HEK293 (cell line): ENCODE measurements at regions of chr19 and their contacts with region 1.

Region 1: DNA sequence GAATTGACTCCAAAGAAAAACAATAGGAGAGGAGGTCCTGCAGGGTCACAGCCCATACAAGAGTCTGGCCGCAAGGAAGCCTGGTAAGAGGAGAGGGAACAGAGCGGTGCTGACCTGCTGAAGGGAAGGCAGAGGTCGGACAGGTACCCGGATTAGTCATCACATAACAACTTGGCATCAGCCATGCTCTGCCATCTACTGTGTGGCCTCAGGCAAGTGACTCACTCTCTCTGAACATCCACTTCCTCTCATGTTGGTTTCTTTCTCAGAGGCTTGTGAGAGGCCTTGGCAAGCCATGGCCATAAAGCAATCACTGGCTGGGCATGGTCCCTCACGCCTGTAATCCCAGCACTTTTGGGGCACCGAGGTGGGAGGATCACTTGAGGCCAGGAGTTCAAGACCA is 7.4 kb upstream of the CAPNS1 start:
- H3K4me3 ChIP-seq: no peak overlapping the region
- H3K27ac ChIP-seq: no peak overlapping the region
- H3K4me1 ChIP-seq: peaks cover 12% of the 10 kb centered on the region
- CTCF ChIP-seq: no peak

Region 2: GRCh38 chr19:36073121-36073872 is 59.2 kb before region 1 on chr19:
- CTCF ChIA-PET with region 1: interaction called, 10 read pairs
- POLR2A ChIA-PET with region 1: interaction called, 6 read pairs
- H3K4me3 ChIP-seq: no peak overlapping the region
- H3K27ac ChIP-seq: peak overlapping the region; percentile 31; the same call in 1 of the 2 replicates
- H3K4me1 ChIP-seq: peaks cover 21% of the 10 kb centered on the region
- CTCF ChIP-seq: no peak

Region 3: DNA sequence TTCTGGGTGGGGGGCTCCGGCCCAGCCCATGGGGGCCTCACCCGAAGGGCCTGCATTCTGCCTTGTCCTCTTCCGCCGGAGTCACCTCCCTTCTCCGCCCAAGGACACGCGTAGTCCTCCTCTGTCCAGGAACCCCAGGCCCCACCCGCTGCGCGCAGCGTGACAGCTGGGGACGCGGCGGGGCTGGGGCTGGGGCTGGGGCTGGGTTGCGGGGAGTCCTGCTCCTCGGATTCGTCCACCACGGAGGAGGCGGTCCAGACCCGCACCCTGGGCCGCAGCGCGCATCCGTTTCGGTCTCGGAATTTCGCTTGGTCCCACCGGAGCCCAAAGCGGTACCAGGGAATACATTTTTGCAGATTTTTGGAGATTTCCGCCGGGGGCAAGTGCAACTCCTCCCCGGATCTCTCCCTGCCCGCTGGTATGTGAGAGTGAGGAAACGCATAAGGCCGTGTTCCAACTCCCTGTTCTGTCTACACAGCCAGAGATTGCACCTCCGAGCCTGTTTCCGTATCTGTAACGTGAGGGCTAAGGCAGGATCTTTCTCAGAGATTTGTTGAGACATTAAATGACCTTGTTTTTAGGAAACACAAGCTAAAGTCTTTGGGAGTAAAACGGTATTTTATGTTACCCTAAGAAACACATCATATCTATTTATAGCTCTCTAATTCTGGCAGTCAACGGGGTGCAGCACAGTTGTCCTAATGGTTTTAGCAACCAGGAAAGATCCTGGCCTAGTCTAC is 20.0 kb after region 1 on chr19 and contains the start of gene COX7A1:
- CTCF ChIA-PET with region 1: interaction called, 16 read pairs
- POLR2A ChIA-PET with region 1: interaction called, 8 read pairs
- H3K4me3 ChIP-seq: no peak within 1 kb of the TSS
- H3K27ac ChIP-seq: no peak within 1 kb of the TSS
- H3K4me1 ChIP-seq: peaks cover 4% of the 10 kb centered on the region; the same call in 1 of the 2 replicates
- CTCF ChIP-seq: no peak

Region 4: DNA sequence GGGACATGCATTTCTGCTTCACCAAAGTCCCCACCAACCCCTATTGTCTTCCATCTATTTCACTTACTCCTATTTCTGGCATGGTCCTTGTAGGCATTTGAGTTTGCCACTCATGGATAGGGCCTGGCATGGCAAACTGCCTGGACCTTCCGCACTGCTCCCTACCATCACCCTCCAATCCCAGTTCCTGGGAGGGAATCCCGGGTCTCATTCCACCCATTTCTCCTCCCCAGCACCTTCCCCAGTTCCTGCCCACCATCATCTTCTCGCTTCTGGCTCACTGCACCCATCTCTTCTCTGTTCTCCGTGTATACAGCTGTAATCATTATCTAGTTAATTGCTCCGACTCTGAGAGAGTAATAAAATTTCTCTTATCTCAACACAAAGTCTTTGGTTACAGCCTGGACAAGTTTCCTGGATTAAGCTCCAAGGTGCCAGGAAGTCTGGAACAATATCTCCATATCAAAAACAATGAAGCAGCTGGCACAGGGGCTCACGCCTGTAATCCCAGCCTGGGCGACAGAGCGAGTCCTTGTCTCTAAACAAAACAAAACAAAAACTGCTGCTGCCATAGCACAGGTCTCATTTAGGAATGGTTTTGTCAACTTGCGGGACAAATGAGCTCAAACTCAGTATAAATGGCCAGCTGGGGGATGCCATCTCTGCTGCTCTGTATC is 36.7 kb after region 1 on chr19:
- CTCF ChIA-PET with region 1: interaction called, 289 read pairs
- POLR2A ChIA-PET with region 1: interaction called, 64 read pairs
- H3K4me3 ChIP-seq: no peak overlapping the region
- H3K27ac ChIP-seq: peak overlapping the region; percentile 92
- H3K4me1 ChIP-seq: peaks cover 28% of the 10 kb centered on the region
- CTCF ChIP-seq: no peak